Vagina (tissue), 2 donors: ENCODE measurements at regions of chr15 and their contacts with region 1.

Region 1: DNA sequence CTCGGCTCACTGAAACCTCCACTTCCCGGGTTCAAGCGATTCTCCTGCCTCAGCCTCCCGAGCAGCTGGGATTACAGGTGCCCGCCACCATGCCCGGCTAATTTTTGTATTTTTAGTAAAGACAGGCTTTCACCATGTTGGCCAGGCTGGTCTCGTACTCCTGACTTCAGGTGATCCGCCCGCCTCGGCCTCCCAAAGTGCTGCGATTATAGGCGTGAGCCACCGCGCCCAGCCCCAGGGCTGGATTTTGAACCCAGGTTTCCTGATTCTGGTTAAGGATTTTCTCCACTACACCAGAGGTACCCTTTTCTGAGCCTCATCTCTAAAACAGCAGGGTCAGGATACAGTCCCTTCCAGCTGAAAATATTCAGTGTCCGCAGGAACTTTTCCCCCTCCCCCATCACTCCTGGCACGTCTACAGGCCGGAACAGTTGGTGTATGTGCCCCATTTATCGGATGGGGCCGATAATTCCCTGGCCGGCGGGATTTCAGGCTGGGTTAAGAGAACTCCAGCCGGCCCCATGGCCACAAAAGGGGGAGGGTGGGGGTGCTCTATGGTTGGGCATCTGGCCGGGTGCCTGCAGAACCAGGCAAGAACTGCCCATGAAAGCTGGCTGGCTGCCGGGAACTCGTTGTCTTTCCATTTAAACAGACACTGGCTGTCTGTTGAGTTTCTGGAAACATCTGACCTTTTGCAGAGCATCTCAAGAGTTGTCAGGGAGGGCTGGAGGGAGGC is 26.8 kb upstream of the SEMA4B start:
- DNase-seq: no peak
- H3K4me3 ChIP-seq: peak overlapping the region in 1 of 2 donors; percentile 30
- H3K27ac ChIP-seq: peak overlapping the region; percentile 84
- H3K4me1 ChIP-seq: peaks cover 24% of the 10 kb centered on the region
- H3K27me3 ChIP-seq: no peaks in the 10 kb centered on the region
- CTCF ChIP-seq: no peak
- POLR2A ChIP-seq: no peak

Region 2: GRCh38 chr15:89679212-89679611 is 495.1 kb before region 1 on chr15 and contains the start of gene PLIN1:
- intact Hi-C with region 1: loop called (anchors 5 kb)
- DNase-seq: no peak
- H3K4me3 ChIP-seq: no peak within 1 kb of the TSS
- H3K27ac ChIP-seq: no peak within 1 kb of the TSS
- H3K4me1 ChIP-seq: peaks cover 13% of the 10 kb centered on the region
- H3K27me3 ChIP-seq: no peaks in the 10 kb centered on the region
- CTCF ChIP-seq: no peak
- POLR2A ChIP-seq: no peak
- total RNA-seq, gene PLIN1: 53.3 TPM

Region 3: DNA sequence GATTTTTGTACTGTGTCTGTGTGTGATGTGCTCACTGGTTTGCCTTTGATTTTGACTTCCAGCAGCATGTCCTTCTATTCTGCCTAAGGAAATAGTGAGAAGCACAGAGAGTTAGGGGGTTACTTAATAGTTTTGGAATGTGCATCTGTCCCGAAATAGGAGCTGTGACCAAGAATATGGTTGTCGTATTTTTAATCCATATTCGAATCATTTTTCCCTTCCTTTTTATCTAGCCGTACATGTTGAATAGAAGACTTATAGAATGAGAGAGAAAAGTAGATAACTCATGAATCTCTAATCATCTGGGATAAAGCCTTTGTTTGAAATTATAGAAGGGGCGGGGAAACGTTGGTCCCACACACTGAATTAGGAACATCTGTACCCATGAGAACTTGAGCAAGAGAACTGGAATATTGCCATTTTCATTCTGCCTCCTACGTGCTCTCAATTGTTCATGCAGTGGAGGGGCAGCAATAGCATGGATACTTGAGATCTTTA is 379.0 kb after region 1 on chr15:
- intact Hi-C with region 1: no loop called
- DNase-seq: no peak
- H3K4me3 ChIP-seq: no peak overlapping the region
- H3K27ac ChIP-seq: peak overlapping the region; percentile 76
- H3K4me1 ChIP-seq: peaks cover 53% of the 10 kb centered on the region
- H3K27me3 ChIP-seq: no peaks in the 10 kb centered on the region
- CTCF ChIP-seq: no peak
- POLR2A ChIP-seq: no peak